Activated T-helper 2 cell treated with anti-CD3 and anti-CD28 coated beads, Interferon-gamma antibody, Interleukin-2, Interleukin-4, amounts not matched to agents 10 μg/mL and 5 μg/mL and 100 μg/mL, durations not matched to agents 14 hours and 24 hours and 36 hours (primary cell): ENCODE measurements at regions of chr5 and their contacts with region 1.

Region 1: GRCh38 chr5:69217548-69218526 is 16.8 kb upstream of the CDK7 start:
- DNase-seq: peak; percentile 88
- H3K4me3 Mint-ChIP-seq: peak overlapping the region; percentile 98
- H3K27ac Mint-ChIP-seq: peak overlapping the region; percentile 97
- H3K4me1 Mint-ChIP-seq: peaks cover 10% of the 10 kb centered on the region
- H3K27me3 Mint-ChIP-seq: no peaks in the 10 kb centered on the region

Region 2: DNA sequence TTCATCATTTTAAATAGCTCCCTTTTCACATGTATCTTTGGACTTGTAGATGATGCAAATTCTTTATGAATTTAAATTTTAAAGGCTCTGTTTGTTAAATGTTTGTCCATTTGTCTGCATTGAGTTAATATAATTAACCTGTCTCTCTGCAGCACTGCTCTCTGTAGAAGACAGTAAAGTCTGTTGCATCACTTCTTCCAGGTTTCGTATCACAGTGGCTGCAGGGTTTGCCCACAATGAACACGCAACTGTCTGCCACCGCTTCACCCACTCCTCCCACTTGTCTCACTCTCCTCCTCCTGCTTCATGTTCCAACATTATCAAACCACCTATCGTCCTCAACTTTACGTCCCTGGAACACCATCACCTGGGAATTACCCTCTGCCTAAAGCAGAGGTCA is 355.3 kb before region 1 on chr5:
- intact Hi-C with region 1: no loop called
- DNase-seq: no peak
- H3K4me3 Mint-ChIP-seq: no peak overlapping the region
- H3K27ac Mint-ChIP-seq: no peak overlapping the region
- H3K4me1 Mint-ChIP-seq: no peaks in the 10 kb centered on the region
- H3K27me3 Mint-ChIP-seq: peaks cover 10% of the 10 kb centered on the region

Region 3: GRCh38 chr5:68973696-68974095 is 244.1 kb before region 1 on chr5:
- intact Hi-C with region 1: no loop called
- DNase-seq: no peak
- H3K4me3 Mint-ChIP-seq: no peak overlapping the region
- H3K27ac Mint-ChIP-seq: no peak overlapping the region
- H3K4me1 Mint-ChIP-seq: no peaks in the 10 kb centered on the region
- H3K27me3 Mint-ChIP-seq: peaks cover 17% of the 10 kb centered on the region

Region 4: GRCh38 chr5:69166686-69167492 is 50.9 kb before region 1 on chr5 and contains the start of gene CCNB1:
- intact Hi-C with region 1: loop called (anchors 2 kb)
- DNase-seq: peak; percentile 99
- H3K4me3 Mint-ChIP-seq: peak within 1 kb of the TSS; percentile 94
- H3K27ac Mint-ChIP-seq: peak within 1 kb of the TSS; percentile 69
- H3K4me1 Mint-ChIP-seq: peaks cover 32% of the 10 kb centered on the region
- H3K27me3 Mint-ChIP-seq: no peaks in the 10 kb centered on the region
- total RNA-seq, gene CCNB1: 152 and 164 TPM in 2 replicates

Region 5: GRCh38 chr5:69189162-69190086 is 28.4 kb before region 1 on chr5 and contains the start of gene CENPH:
- intact Hi-C with region 1: loop called (anchors 1 kb)
- DNase-seq: peak; percentile 93
- H3K4me3 Mint-ChIP-seq: peak within 1 kb of the TSS; percentile 92
- H3K27ac Mint-ChIP-seq: peak within 1 kb of the TSS; percentile 97
- H3K4me1 Mint-ChIP-seq: peaks cover 13% of the 10 kb centered on the region
- H3K27me3 Mint-ChIP-seq: no peaks in the 10 kb centered on the region
- total RNA-seq, gene CENPH: 35.3 and 37.0 TPM in 2 replicates

Region 6: GRCh38 chr5:69234457-69235268 is 16.8 kb after region 1 on chr5 and contains the start of gene CDK7:
- intact Hi-C with region 1: loop called (anchors 1 kb)
- DNase-seq: peak; percentile 91
- H3K4me3 Mint-ChIP-seq: peak within 1 kb of the TSS; percentile 95
- H3K27ac Mint-ChIP-seq: peak within 1 kb of the TSS; percentile 80
- H3K4me1 Mint-ChIP-seq: peaks cover 30% of the 10 kb centered on the region
- H3K27me3 Mint-ChIP-seq: no peaks in the 10 kb centered on the region
- total RNA-seq, gene CDK7: 46.0 and 49.4 TPM in 2 replicates

Region 7: GRCh38 chr5:69317391-69317790 is 99.6 kb after region 1 on chr5:
- intact Hi-C with region 1: no loop called
- DNase-seq: no peak
- H3K4me3 Mint-ChIP-seq: no peak overlapping the region
- H3K27ac Mint-ChIP-seq: no peak overlapping the region
- H3K4me1 Mint-ChIP-seq: peaks cover 3% of the 10 kb centered on the region
- H3K27me3 Mint-ChIP-seq: no peaks in the 10 kb centered on the region

Region 8: DNA sequence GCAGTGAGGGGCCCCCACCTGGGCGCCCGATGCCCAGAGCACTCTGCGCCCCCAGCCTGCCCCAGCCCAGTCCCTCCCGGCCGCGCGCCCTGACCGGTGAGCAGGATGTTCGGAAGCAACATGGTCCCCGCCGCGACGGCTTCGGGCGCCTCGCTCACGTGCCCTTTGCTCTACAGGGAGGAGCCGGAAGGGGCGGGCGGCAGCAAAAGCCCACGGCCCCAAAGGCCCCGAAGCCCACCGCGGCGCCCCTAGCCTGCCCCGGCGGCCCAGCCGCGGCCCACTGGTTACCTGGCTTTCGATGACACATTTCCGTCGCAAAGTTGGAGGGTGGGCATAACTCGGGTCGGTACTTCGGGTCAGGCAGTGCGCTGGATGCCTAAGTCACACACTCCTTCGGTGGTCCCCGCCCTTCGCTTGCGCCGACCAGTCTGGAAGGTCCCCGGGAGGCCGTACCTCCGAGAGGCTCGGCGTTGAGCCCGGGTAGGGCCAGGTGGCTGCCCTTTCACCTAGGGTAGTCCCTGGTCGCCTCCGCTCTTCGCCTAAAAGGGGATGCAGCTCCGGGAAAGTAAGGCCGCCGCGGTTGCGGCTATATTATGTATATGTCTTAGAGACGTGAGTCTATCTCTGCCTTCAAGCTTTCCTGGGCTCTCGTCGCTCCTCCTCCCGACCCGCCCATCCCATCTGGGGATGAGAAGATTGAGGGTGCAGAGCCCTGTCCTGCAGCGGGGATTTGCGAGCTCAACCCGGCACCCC is 151.7 kb after region 1 on chr5 and contains the starts of genes AK6, RAD17 and TAF9:
- intact Hi-C with region 1: loop called (anchors 1 kb)
- DNase-seq: peak; percentile 90
- H3K4me3 Mint-ChIP-seq: peak within 1 kb of the TSS; percentile 96
- H3K27ac Mint-ChIP-seq: peak within 1 kb of the TSS; percentile 97
- H3K4me1 Mint-ChIP-seq: peaks cover 31% of the 10 kb centered on the region
- H3K27me3 Mint-ChIP-seq: no peaks in the 10 kb centered on the region
- total RNA-seq, gene AK6: 59.8 and 60.1 TPM in 2 replicates
- total RNA-seq, gene RAD17: 24.7 and 28.0 TPM in 2 replicates
- total RNA-seq, gene TAF9: 58.0 and 63.2 TPM in 2 replicates